ENCODE measurements at regions of chr2 and their contacts with region 1.

Region 1: DNA sequence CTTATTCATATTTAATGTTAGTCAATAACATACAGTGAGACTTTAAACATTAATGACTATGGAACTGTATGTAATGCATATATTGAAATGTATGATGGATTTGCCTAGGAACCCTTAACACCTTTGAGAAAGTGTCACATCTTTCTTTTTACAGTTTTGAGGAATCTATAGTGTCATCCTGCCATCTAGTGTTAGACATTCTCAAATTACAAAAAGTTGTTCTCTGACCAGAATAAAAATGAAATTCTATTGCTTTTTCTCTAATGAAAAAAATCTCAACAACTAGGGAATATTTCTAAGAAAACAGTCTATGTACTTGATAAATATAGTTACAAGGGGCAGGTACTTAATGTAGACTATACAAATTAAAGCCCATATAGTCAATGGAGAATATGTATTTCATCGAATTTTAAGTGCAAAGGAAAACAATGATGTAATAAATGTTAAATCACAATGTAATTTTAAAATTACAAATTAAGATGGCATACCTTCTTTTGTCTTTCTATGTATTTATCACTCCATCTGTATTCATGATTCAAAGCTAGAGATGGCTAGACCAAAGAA is 5.1 kb upstream of the CALCRL start:
- DNase-seq: no peak
- ATAC-seq: no peak
- H3K4me3 ChIP-seq: no peak overlapping the region
- H3K27ac ChIP-seq: no peak overlapping the region
- H3K4me1 ChIP-seq: no peaks in the 10 kb centered on the region
- H3K27me3 ChIP-seq: no peaks in the 10 kb centered on the region
- CTCF ChIP-seq: peak; percentile 49

Region 2: GRCh38 chr2:186862869-186863709 is 590.1 kb before region 1 on chr2:
- intact Hi-C with region 1: loop called (anchors 5 kb)
- DNase-seq: no peak
- ATAC-seq: peak in 1 of 2 donors; percentile 61
- H3K4me3 ChIP-seq: no peak overlapping the region
- H3K27ac ChIP-seq: no peak overlapping the region
- H3K4me1 ChIP-seq: no peaks in the 10 kb centered on the region
- H3K27me3 ChIP-seq: no peaks in the 10 kb centered on the region
- CTCF ChIP-seq: peak; percentile 75

Region 3: DNA sequence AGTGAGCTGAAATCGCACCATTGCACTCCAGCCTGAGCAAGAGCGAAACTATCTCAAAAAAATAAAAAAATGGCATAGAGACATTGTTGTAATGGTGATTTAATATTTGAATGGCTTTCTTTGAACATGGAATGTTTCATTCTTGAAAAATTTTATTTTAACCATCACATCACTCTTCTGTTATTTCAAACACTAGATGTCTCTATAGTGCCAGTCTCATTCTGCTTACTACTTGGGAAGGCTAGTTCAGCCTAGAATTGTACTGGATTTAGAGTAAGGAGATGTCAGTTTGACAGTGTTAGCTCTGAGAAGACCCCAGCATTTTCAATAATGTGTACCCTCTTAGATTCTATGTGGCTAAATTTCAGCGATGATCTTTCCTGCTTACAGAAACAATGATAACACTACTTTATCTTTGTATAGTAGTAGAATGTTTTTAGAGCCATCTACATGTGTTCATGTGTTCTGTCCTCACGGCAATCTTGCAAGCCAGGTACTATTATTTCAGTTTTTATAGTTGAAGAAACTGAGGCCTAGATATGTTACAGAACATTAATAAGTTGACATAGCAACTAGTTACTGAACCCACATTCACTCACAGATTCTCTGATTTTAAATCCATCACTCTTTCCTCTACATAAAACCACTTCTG is 461.3 kb before region 1 on chr2:
- intact Hi-C with region 1: no loop called
- DNase-seq: no peak
- ATAC-seq: no peak
- H3K4me3 ChIP-seq: no peak overlapping the region
- H3K27ac ChIP-seq: no peak overlapping the region
- H3K4me1 ChIP-seq: no peaks in the 10 kb centered on the region
- H3K27me3 ChIP-seq: no peaks in the 10 kb centered on the region
- CTCF ChIP-seq: peak; percentile 20

Measured in lower lobe of right lung (tissue), 2 donors.